RWPE1 (cell line): ENCODE measurements at regions of chr12 and their contacts with region 1.

Region 1: DNA sequence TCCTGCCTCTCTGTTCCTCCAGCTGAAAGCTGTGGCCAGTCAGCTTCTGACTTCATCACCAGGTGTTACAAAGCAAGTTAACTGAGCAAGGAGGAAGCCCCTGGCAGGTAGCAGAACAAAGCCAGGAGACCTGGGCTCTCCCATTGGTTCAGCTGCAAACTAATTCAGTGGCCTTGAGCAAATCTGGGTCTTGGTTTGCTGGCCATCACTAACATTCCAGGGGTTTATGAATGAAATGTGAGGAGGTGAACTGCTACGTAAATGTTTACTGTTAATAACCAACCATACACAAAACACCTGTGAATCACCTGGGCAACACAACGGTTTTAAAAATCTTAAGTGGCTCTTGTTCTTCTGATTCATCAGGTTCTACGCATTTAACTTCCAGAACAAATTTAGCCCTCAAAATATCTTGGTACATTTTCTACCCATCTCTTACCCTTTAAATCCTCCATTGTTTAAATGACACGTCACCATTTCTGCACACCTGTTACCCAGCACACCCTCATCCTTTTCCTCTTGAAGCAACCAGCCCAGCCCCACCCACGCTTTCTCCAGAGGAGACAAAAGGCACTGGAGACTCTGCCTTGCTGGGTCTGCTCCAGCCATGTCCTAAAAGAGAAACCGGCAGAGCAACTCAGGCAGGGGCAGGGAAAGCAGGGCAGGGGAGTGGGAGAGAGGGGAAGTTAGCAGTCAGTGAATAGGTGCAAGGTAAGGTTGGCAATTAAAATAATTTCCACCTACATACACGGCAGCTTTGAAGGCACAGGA is 49.3 kb upstream of the TSPAN11 start:
- DNase-seq: no peak
- H3K27ac ChIP-seq: no peak overlapping the region
- CTCF ChIP-seq: no peak

Region 2: DNA sequence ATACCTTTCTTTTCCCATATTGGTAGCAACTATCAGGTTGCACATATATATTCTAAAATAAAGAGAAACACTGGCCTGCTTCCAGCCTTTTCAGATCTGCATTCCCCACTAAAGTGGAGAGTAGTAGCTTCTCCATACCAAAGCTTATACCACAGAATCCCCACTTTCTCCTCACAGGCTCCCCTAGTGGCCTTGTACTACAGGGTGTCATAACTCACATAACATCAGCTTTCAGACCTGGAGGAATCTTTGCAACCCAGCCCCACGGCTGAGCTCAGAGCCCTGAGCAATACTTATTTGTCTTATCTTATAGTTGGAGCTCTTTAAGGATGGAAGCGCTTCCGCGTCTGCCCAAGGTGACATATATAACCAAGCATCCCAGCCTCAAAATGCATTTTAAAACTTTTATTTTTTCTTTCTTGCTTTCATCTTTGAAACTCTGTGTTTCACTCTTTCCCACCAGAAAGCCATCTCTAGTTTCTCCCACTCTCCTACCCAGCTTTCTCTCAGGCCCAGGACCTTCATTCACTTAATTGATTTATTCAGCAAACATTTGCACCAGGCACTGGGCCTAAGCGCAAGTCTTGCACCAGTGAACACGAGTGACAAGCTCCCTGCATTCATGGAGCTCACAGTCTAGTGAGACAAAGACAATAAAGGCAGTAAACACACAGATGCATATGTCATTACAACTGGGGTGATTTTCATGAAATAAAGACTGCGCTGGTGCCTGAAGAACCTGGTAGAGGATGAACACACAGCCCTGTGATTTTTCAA is 436.3 kb before region 1 on chr12:
- CTCF ChIA-PET with region 1: no interaction called
- POLR2A ChIA-PET with region 1: no interaction called
- DNase-seq: peak; percentile 27
- H3K27ac ChIP-seq: no peak overlapping the region
- CTCF ChIP-seq: no peak

Region 3: GRCh38 chr12:30822385-30823155 is 54.7 kb before region 1 on chr12:
- CTCF ChIA-PET with region 1: interaction called, 10 read pairs
- POLR2A ChIA-PET with region 1: no interaction called
- DNase-seq: peak; percentile 24
- H3K27ac ChIP-seq: no peak overlapping the region
- CTCF ChIP-seq: no peak; the same call in 1 of the 2 replicates